AG04449 (cell line): ENCODE measurements at regions of chr4 and their contacts with region 1.

Region 1: GRCh38 chr4:110510955-110511544 is 35.1 kb downstream of the ENPEP start:
- DNase-seq: peak; percentile 19
- H3K4me3 ChIP-seq: no peak overlapping the region
- CTCF ChIP-seq: peak; percentile 39

Region 2: GRCh38 chr4:110020139-110020538 is 490.9 kb before region 1 on chr4:
- CTCF ChIA-PET with region 1: interaction called, 12 read pairs
- POLR2A ChIA-PET with region 1: no interaction called
- DNase-seq: no peak
- H3K4me3 ChIP-seq: no peak overlapping the region
- CTCF ChIP-seq: no peak

Region 3: DNA sequence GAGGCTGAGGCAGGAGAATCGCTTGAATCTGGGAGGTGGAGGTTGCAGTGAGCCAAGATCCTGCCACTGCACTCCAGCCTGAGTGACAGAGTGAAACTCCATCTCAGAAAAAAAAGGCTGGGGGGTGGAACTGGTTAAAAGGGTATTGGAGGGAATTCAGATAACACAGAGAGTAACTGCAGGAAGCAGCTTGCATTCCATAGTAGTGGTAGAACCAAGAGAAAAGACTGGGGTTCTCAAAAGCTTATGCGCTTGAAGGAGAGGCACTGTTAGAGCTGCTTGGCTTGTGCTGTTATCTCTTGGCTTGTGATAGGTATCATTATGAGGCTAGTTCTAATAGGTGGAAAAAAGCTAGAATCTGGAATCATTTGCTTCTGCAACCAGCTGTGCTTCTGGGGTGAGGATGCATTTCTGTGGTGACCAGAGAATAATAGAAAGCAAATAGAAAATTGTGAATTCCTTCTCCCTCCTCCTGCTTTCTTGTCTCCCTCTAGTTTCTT is 221.4 kb before region 1 on chr4:
- CTCF ChIA-PET with region 1: interaction called, 13 read pairs
- POLR2A ChIA-PET with region 1: no interaction called
- DNase-seq: no peak
- H3K4me3 ChIP-seq: no peak overlapping the region
- CTCF ChIP-seq: no peak

Region 4: GRCh38 chr4:110467400-110467799 is 43.6 kb before region 1 on chr4:
- CTCF ChIA-PET with region 1: interaction called, 10 read pairs
- POLR2A ChIA-PET with region 1: no interaction called
- DNase-seq: no peak
- H3K4me3 ChIP-seq: no peak overlapping the region
- CTCF ChIP-seq: no peak

Region 5: DNA sequence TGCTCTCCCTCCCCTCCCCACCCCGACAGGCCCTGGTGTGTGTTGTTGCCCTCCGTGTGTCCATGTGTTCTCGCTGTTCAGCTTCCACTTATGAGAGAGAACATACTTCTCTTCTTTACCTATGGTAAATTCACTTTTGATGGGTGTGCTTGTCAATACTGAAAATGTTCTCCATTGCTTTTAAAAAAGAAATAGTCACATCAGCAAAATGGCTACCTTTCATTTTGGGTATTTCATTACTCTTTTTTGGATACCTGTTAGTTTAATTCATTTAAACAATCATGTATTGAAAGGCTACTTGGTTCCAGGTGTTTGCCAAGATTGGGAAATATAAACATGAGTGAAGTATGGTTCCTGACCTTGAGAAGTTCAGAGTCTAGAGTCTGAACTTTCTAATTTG is 219.3 kb after region 1 on chr4:
- CTCF ChIA-PET with region 1: no interaction called
- POLR2A ChIA-PET with region 1: no interaction called
- DNase-seq: no peak
- H3K4me3 ChIP-seq: no peak overlapping the region
- CTCF ChIP-seq: no peak